CD8-positive, alpha-beta T cell (primary cell): ENCODE measurements at regions of chr13 and their contacts with region 1.

Region 1: GRCh38 chr13:75549262-75550158 is at the start of gene UCHL3:
- DNase-seq: peak; percentile 95 to 99 (median 97)
- ATAC-seq: peak; percentile 92
- H3K4me3 ChIP-seq: peak within 1 kb of the TSS; percentile 74 to 82
- H3K4me3 Mint-ChIP-seq: peak within 1 kb of the TSS; percentile 95
- H3K27ac ChIP-seq: peak within 1 kb of the TSS; percentile 84 to 87
- H3K27ac Mint-ChIP-seq: peak within 1 kb of the TSS; percentile 97
- H3K4me1 ChIP-seq: peaks cover 19% of the 10 kb centered on the region
- H3K4me1 Mint-ChIP-seq: peaks cover 44% of the 10 kb centered on the region
- H3K27me3 ChIP-seq: no peaks in the 10 kb centered on the region
- H3K27me3 Mint-ChIP-seq: no peaks in the 10 kb centered on the region
- CTCF ChIP-seq: peak; percentile 91
- total RNA-seq, gene UCHL3: 17.7 to 17.9 TPM

Region 2: DNA sequence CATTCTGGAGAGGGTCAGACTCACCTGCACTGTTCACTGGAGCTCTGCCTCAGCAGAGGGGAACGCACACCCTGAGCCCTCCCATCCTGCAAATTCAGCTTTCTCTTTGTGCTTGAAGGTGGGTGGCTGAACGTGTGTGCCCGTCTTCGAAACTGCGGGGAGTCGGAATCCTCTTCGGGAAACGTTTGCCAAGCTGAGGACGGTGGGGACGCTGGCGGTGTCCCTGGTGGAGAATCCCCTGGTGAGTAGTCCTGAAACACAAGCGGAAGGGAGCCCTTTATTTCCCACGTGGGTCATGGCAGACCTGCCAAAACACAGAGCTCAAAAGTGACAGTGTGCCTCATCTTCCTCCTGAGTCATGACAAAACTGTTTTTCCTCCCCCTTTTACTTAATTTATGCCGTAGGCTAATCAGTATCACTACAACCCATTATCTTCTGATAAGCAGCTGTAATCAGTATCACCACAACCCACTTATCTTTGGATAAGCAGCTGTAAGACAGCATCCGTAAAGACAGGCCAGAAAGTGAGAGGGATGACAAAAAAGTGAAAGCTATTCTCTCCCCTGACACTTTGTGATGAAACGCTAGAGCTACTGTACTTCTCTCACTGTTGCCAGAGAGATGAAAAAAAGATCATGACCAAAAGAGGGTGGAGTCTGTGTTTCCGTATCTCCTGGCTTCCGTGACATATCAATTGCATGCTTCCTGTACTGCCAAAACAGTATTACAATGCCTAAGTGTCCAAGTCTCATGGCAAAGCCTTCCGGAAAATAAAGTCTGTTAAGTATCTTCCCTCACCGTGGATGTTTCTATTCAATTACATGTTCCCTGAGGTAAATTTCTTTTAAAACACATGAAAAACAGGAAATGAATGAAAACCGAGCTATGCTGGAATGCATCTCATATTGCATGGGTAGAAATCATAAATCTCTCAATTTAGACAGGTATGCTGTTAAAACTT is 223.1 kb before region 1 on chr13:
- CTCF ChIA-PET with region 1: interaction called, 3 read pairs
- POLR2A ChIA-PET with region 1: interaction called, 5 read pairs
- intact Hi-C with region 1: loop called in 1 of 2 experiments (anchors 1 kb)
- DNase-seq: peak in 8 of 9 experiments; percentile 21 to 88 (median 46)
- ATAC-seq: peak; percentile 90
- H3K4me3 ChIP-seq: peak overlapping the region; percentile 55 to 65
- H3K4me3 Mint-ChIP-seq: peak overlapping the region; percentile 90
- H3K27ac ChIP-seq: peak overlapping the region; percentile 85 to 93
- H3K27ac Mint-ChIP-seq: peak overlapping the region; percentile 98
- H3K4me1 ChIP-seq: peaks cover 28% of the 10 kb centered on the region
- H3K4me1 Mint-ChIP-seq: peaks cover 48% of the 10 kb centered on the region
- H3K27me3 ChIP-seq: no peaks in the 10 kb centered on the region
- H3K27me3 Mint-ChIP-seq: no peaks in the 10 kb centered on the region
- CTCF ChIP-seq: no peak

Region 3: DNA sequence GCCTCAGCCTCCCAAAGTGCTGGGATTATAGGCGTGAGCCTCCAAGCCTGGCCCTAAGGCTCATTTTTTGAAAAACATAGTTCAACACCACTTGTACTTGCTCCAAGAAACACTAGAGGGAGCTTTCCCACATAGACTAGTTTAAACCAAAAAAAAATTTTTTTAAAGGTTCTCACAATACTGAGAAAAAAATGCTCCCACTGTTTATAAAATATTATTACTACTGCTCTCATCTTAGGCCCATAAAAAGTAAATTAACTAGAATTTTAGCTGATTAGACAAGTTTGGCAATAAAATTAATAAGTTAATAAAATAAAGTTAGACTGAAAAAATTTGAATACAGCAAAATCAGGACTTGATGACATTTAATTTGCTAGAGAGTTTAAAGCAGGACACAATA is 177.0 kb before region 1 on chr13:
- CTCF ChIA-PET with region 1: interaction called, 6 read pairs
- POLR2A ChIA-PET with region 1: no interaction called
- intact Hi-C with region 1: loop called (anchors 1 to 2 kb)
- DNase-seq: peak in 2 of 9 experiments; percentile 41 to 60
- ATAC-seq: peak; percentile 80
- H3K4me3 ChIP-seq: no peak overlapping the region
- H3K4me3 Mint-ChIP-seq: no peak overlapping the region
- H3K27ac ChIP-seq: no peak overlapping the region
- H3K27ac Mint-ChIP-seq: no peak overlapping the region
- H3K4me1 ChIP-seq: no peaks in the 10 kb centered on the region
- H3K4me1 Mint-ChIP-seq: no peaks in the 10 kb centered on the region
- H3K27me3 ChIP-seq: no peaks in the 10 kb centered on the region
- H3K27me3 Mint-ChIP-seq: peaks cover 3% of the 10 kb centered on the region
- CTCF ChIP-seq: peak; percentile 80

Region 4: GRCh38 chr13:75537401-75538365 is 11.8 kb before region 1 on chr13 and contains the start of gene COMMD6:
- CTCF ChIA-PET with region 1: interaction called, 3 read pairs
- POLR2A ChIA-PET with region 1: interaction called, 3 read pairs
- intact Hi-C with region 1: loop called (anchors 1 kb)
- DNase-seq: peak; percentile 34 to 86 (median 68)
- ATAC-seq: peak; percentile 94
- H3K4me3 ChIP-seq: peak within 1 kb of the TSS; percentile 71 to 87
- H3K4me3 Mint-ChIP-seq: peak within 1 kb of the TSS; percentile 98
- H3K27ac ChIP-seq: peak within 1 kb of the TSS; percentile 43 to 71
- H3K27ac Mint-ChIP-seq: peak within 1 kb of the TSS; percentile 96
- H3K4me1 ChIP-seq: peaks cover 14% of the 10 kb centered on the region
- H3K4me1 Mint-ChIP-seq: peaks cover 46% of the 10 kb centered on the region
- H3K27me3 ChIP-seq: no peaks in the 10 kb centered on the region
- H3K27me3 Mint-ChIP-seq: no peaks in the 10 kb centered on the region
- CTCF ChIP-seq: no peak
- total RNA-seq, gene COMMD6: 191 to 204 TPM

Region 5: DNA sequence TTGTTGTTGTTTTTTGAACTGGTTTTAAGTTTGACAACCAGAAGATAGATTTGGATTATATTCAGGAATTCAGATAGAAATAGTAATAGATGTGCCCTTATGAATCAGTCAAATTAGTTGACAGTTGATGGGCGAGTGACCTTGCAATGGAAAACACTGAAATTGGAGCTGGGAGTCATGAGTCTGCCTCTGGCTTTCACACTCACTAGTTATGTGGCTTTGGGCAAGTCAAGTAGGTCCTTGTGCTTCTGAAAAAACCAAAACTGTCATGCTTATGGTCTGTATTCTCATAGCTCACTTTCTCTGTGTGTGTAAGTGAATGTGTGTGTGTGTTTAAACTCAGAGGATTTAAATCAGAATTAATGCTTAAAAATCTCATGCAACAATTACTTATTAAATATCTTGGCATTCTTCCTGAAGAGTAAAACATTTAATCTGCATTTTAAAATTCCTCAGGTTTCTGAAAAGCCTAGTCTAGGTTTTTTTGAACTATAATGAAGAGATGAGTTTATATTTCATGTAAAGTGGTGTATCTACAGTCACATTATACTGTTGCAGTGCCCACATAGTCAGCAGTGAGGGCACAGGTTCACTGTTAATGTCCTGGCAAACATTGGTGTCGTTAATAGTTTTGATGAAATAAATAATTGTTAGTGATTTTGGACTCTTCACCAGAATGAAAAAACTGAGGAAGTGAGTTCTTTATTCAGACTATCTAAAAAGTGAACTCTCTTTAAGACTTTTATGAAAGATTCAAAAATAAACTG is 32.5 kb after region 1 on chr13:
- CTCF ChIA-PET with region 1: no interaction called
- POLR2A ChIA-PET with region 1: no interaction called
- intact Hi-C with region 1: no loop called
- DNase-seq: no peak
- ATAC-seq: no peak
- H3K4me3 ChIP-seq: no peak overlapping the region
- H3K4me3 Mint-ChIP-seq: no peak overlapping the region
- H3K27ac ChIP-seq: no peak overlapping the region
- H3K27ac Mint-ChIP-seq: no peak overlapping the region
- H3K4me1 ChIP-seq: no peaks in the 10 kb centered on the region
- H3K4me1 Mint-ChIP-seq: peaks cover 9% of the 10 kb centered on the region
- H3K27me3 ChIP-seq: no peaks in the 10 kb centered on the region
- H3K27me3 Mint-ChIP-seq: no peaks in the 10 kb centered on the region
- CTCF ChIP-seq: no peak

Region 6: DNA sequence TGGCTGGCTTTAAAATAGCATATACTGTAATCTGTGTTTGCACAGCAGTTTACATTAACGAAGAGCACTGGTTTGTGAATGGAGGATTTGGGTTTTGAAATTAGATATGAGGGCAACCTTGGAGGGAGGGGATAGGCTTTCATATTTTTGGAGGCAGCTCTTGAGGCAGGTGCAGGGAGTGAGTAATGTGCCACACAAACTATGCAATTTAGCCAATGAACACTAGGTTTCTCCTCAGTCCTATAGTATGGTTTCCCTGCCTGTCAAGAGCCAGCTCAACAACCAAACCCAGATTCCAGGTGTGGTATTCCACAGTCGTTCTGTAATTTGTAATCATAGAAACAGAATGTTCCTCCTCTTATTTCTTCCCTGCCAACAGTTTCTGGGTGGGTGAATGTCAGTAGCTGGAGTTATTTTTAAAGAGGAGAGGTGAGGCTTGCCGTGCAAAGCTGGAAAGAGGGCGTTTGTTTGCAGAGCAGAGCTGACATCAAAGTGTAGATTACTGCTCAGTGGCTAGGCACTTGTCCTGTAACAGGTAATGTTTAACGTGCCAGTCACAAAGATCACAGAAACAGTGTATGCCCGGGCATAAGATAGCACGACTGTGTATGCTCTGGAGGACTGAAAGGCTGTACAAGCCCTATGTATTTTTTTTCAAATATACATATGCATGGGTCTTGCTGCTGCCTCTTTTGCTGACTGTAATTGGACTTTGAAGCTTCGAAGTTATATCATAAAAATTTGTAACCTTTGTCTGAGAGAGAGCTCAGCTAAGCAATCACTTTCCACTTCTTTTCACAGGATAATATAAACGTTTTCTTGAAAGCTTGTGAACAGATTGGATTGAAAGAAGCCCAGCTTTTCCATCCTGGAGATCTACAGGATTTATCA is 210.9 kb after region 1 on chr13:
- CTCF ChIA-PET with region 1: no interaction called
- POLR2A ChIA-PET with region 1: no interaction called
- intact Hi-C with region 1: loop called in 1 of 2 experiments (anchors 5 kb)
- DNase-seq: peak in 4 of 9 experiments; percentile 10 to 60 (median 46)
- ATAC-seq: peak; percentile 71
- H3K4me3 ChIP-seq: peak overlapping the region; percentile 32 to 40
- H3K4me3 Mint-ChIP-seq: peak overlapping the region; percentile 83
- H3K27ac ChIP-seq: peak overlapping the region in 1 of 2 experiments; percentile 50
- H3K27ac Mint-ChIP-seq: peak overlapping the region; percentile 84
- H3K4me1 ChIP-seq: peaks cover 34% of the 10 kb centered on the region
- H3K4me1 Mint-ChIP-seq: peaks cover 59% of the 10 kb centered on the region
- H3K27me3 ChIP-seq: no peaks in the 10 kb centered on the region
- H3K27me3 Mint-ChIP-seq: no peaks in the 10 kb centered on the region
- CTCF ChIP-seq: peak; percentile 17

Region 7: DNA sequence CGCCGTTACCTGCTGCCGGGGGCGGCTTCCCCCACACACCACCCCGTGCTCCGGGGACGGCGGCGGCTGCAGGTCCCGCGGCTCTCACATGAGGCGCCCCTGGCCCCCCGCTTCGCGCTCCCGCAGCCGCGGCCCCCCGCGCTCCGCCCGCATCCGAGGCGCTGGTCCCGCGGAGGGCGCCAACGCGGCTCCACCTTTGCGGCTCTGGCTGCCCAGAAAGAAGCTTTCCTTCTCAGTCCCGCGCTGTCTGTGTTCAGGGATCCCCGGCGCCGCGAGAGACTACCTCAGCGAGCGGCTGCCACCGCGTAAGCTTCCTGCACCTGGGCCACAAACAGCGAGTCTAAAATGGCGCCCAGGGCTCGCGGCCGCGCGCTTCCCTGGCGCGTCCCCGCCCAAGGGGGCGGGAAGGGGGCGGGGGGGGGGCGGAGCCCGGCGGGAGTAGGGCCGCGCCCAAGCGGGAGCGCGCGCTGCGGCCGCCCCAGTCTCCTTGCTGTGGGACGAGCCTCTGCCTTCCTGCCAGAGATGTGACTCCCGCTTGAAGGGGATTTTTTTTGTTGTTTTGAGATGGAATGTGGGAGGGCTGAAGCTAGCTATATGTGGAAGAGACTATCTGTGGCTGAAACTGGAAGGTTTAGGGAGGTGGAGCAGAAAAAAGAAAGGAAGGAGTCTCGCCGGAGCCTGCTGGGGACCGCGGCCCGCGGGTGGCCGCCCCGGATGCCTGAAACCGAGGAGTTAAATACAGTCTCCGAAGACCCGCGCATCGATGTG is 1477.5 kb after region 1 on chr13 and contains the start of gene FBXL3:
- CTCF ChIA-PET with region 1: no interaction called
- POLR2A ChIA-PET with region 1: no interaction called
- intact Hi-C with region 1: loop called in 1 of 2 experiments (anchors 10 kb)
- DNase-seq: peak; percentile 68 to 92 (median 80)
- ATAC-seq: peak; percentile 64
- H3K4me3 ChIP-seq: peak within 1 kb of the TSS; percentile 73 to 80
- H3K4me3 Mint-ChIP-seq: peak within 1 kb of the TSS; percentile 97
- H3K27ac ChIP-seq: peak within 1 kb of the TSS; percentile 80 to 97
- H3K27ac Mint-ChIP-seq: peak within 1 kb of the TSS; percentile 99
- H3K4me1 ChIP-seq: peaks cover 40% of the 10 kb centered on the region
- H3K4me1 Mint-ChIP-seq: peaks cover 51% of the 10 kb centered on the region
- H3K27me3 ChIP-seq: no peaks in the 10 kb centered on the region
- H3K27me3 Mint-ChIP-seq: no peaks in the 10 kb centered on the region
- CTCF ChIP-seq: no peak
- total RNA-seq, gene FBXL3: 91.3 to 97.0 TPM